CD4-positive, alpha-beta T cell (primary cell): ENCODE measurements at regions of chr12 and their contacts with region 1.

Region 1: GRCh38 chr12:54935235-54935951 is 49.2 kb downstream of the TESPA1 start:
- DNase-seq: peak in 10 of 14 experiments; percentile 6 to 84 (median 26)
- ATAC-seq: peak; percentile 94
- H3K4me3 ChIP-seq: no peak overlapping the region
- H3K4me3 Mint-ChIP-seq: peak overlapping the region; percentile 55
- H3K27ac ChIP-seq: peak overlapping the region; percentile 39 to 71
- H3K27ac Mint-ChIP-seq: peak overlapping the region; percentile 74
- H3K4me1 ChIP-seq: peaks cover 33% of the 10 kb centered on the region
- H3K4me1 Mint-ChIP-seq: peaks cover 49% of the 10 kb centered on the region
- H3K27me3 ChIP-seq: no peaks in the 10 kb centered on the region
- H3K27me3 Mint-ChIP-seq: no peaks in the 10 kb centered on the region
- CTCF ChIP-seq: peak; percentile 32

Region 2: GRCh38 chr12:54509617-54510016 is 425.8 kb before region 1 on chr12:
- CTCF ChIA-PET with region 1: no interaction called
- POLR2A ChIA-PET with region 1: no interaction called
- intact Hi-C with region 1: no loop called
- DNase-seq: no peak
- ATAC-seq: no peak
- H3K4me3 ChIP-seq: no peak overlapping the region
- H3K4me3 Mint-ChIP-seq: no peak overlapping the region
- H3K27ac ChIP-seq: no peak overlapping the region
- H3K27ac Mint-ChIP-seq: no peak overlapping the region
- H3K4me1 ChIP-seq: peaks cover 3% of the 10 kb centered on the region
- H3K4me1 Mint-ChIP-seq: peaks cover 15% of the 10 kb centered on the region
- H3K27me3 ChIP-seq: no peaks in the 10 kb centered on the region
- H3K27me3 Mint-ChIP-seq: no peaks in the 10 kb centered on the region
- CTCF ChIP-seq: no peak

Region 3: GRCh38 chr12:54853995-54854566 is 81.3 kb before region 1 on chr12 and contains the start of gene MUCL1:
- CTCF ChIA-PET with region 1: no interaction called
- POLR2A ChIA-PET with region 1: interaction called, 4 read pairs
- intact Hi-C with region 1: loop called in 1 of 2 experiments (anchors 5 kb)
- DNase-seq: peak; percentile 46 to 84 (median 64)
- ATAC-seq: peak; percentile 100
- H3K4me3 ChIP-seq: no peak within 1 kb of the TSS
- H3K4me3 Mint-ChIP-seq: no peak within 1 kb of the TSS
- H3K27ac ChIP-seq: no peak within 1 kb of the TSS
- H3K27ac Mint-ChIP-seq: no peak within 1 kb of the TSS
- H3K4me1 ChIP-seq: no peaks in the 10 kb centered on the region
- H3K4me1 Mint-ChIP-seq: no peaks in the 10 kb centered on the region
- H3K27me3 ChIP-seq: no peaks in the 10 kb centered on the region
- H3K27me3 Mint-ChIP-seq: no peaks in the 10 kb centered on the region
- CTCF ChIP-seq: peak; percentile 90
- total RNA-seq, gene MUCL1: not detected

Region 4: DNA sequence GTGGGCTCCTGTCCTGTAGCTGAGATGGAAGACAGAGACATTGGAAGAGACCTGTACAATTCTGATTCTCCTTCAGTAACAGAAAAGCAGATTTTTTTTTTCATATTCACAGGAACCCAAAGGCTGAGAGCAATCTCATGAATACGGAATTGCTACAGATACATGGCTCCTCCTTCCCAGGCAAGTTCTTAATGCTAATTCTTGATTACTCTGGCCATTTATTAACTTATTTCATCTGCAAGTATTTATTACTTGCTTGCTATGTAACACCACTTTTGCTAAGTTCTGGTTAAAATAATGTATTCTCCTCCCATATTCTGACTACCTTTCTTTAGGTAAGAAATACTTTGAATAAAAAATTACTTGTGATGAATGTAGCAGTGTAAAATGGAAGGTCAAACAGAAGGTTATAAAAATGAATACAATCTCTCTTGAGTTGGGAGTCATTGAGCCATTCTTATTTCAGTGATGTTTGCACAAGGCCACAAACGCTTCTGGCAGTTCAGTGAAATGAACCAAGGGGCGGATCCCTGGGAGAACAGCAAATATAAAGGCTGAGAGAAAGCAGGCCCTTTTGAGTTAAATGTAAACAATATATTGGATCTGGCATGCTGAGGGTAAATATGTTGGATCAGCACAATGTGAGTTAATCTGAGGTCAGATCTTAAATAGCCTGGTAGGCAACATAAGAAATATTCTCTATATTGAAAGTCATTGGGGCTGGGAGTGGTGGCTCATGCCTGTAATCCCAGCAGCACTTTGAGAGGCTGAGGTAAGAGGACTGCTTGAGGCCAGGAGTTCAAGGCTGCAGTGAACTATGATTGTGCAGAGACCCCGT is 43.5 kb before region 1 on chr12:
- CTCF ChIA-PET with region 1: no interaction called
- POLR2A ChIA-PET with region 1: no interaction called
- intact Hi-C with region 1: no loop called
- DNase-seq: no peak
- ATAC-seq: no peak
- H3K4me3 ChIP-seq: no peak overlapping the region
- H3K4me3 Mint-ChIP-seq: no peak overlapping the region
- H3K27ac ChIP-seq: no peak overlapping the region
- H3K27ac Mint-ChIP-seq: no peak overlapping the region
- H3K4me1 ChIP-seq: no peaks in the 10 kb centered on the region
- H3K4me1 Mint-ChIP-seq: no peaks in the 10 kb centered on the region
- H3K27me3 ChIP-seq: no peaks in the 10 kb centered on the region
- H3K27me3 Mint-ChIP-seq: no peaks in the 10 kb centered on the region
- CTCF ChIP-seq: no peak

Region 5: GRCh38 chr12:54984658-54985376 is 49.4 kb after region 1 on chr12 and contains the start of gene TESPA1:
- CTCF ChIA-PET with region 1: interaction called, 4 read pairs
- POLR2A ChIA-PET with region 1: interaction called, 35 read pairs
- intact Hi-C with region 1: no loop called
- DNase-seq: peak; percentile 74 to 94 (median 84)
- ATAC-seq: peak; percentile 87
- H3K4me3 ChIP-seq: peak within 1 kb of the TSS; percentile 73
- H3K4me3 Mint-ChIP-seq: peak within 1 kb of the TSS; percentile 91
- H3K27ac ChIP-seq: peak within 1 kb of the TSS; percentile 88 to 97
- H3K27ac Mint-ChIP-seq: peak within 1 kb of the TSS; percentile 100
- H3K4me1 ChIP-seq: peaks cover 40% of the 10 kb centered on the region
- H3K4me1 Mint-ChIP-seq: peaks cover 98% of the 10 kb centered on the region
- H3K27me3 ChIP-seq: no peaks in the 10 kb centered on the region
- H3K27me3 Mint-ChIP-seq: no peaks in the 10 kb centered on the region
- CTCF ChIP-seq: no peak
- total RNA-seq, gene TESPA1: 96.3 to 98.2 TPM